Common myeloid progenitor, CD34-positive (primary cell): ENCODE measurements at regions of chr14 and their contacts with region 1.

Region 1: GRCh38 chr14:23483236-23483854 is 13.8 kb downstream of the NGDN start:
- DNase-seq: peak; percentile 26 to 40 (median 35)
- H3K4me3 ChIP-seq: no peak overlapping the region
- H3K27ac ChIP-seq: no peak overlapping the region
- H3K4me1 ChIP-seq: peaks cover 0 to 2% (median 0%) of the 10 kb centered on the region in 4 experiments
- H3K27me3 ChIP-seq: no peaks in the 10 kb centered on the region

Region 2: DNA sequence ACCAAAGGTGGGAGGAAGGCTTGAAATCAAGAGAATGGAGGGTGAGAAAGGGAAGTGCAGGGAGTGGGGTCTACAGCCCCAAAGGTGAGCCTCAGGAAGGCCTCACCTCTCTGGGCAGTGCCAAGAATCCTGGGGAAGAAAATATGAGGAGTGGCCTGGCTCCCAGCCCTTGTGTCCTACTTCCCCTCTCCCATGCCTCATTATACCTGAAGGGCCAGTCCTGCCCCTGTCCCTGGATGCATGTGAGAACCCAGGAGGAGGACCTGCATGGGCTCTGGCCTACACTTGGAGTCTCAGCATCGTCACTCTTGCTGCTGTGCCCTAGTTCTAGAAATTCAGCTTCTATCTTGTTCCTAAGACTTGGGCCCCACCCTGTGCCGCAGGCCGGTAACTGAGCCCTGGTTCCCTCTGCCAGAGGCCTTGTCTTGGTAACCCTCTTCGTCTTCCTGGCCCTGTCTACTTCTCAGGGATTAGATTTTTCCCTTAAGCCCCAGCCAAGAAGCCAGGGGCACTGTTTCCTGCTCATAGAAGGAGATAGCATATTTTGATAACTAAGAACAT is 37.0 kb before region 1 on chr14:
- CTCF ChIA-PET with region 1: no interaction called
- POLR2A ChIA-PET with region 1: no interaction called
- DNase-seq: no peak
- H3K4me3 ChIP-seq: no peak overlapping the region
- H3K27ac ChIP-seq: no peak overlapping the region
- H3K4me1 ChIP-seq: no peaks in the 10 kb centered on the region
- H3K27me3 ChIP-seq: peaks cover 0 to 7% (median 0%) of the 10 kb centered on the region in 5 experiments

Region 3: DNA sequence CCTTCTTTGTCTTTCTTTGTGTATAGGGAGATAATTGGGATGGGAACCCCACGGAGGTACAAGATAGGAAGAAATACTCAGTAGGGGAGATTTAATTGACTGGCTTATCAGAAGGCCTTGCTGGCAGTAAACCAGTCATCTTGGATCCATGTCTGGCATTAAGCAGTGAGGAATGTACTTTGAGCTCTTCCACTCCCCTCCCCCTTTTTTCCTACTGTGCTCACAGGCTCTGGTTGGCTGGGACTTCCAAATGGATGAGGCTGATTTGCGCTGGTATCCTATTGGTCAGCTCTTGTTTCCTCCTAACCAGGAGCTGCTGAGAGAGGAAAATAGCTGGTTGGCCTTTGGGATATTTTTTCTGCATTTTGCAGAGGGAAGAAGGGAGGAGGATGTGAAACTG is 10.9 kb after region 1 on chr14:
- CTCF ChIA-PET with region 1: interaction called, 26 read pairs
- POLR2A ChIA-PET with region 1: no interaction called
- DNase-seq: no peak
- H3K4me3 ChIP-seq: no peak overlapping the region
- H3K27ac ChIP-seq: no peak overlapping the region
- H3K4me1 ChIP-seq: no peaks in the 10 kb centered on the region
- H3K27me3 ChIP-seq: no peaks in the 10 kb centered on the region

Region 4: DNA sequence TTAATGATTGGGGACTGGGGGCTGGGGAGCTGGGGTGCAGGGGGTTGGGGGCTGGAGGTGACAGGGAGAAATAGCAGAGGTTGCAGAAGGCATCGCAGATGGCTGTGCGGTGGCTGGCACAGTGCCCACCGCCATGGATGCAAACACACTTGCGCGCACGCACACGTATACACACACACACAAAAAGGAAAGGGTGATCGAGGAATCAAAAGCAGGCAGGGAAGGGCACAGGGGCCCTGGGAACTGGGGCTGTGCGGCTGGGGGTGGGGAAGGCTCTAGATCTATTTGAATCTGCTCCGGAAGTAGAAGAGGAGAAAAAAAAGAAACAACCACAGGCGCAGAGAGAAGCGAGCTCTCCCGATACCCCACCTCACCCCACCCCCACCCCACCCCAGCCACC is 28.8 kb after region 1 on chr14:
- CTCF ChIA-PET with region 1: interaction called, 13 read pairs
- POLR2A ChIA-PET with region 1: no interaction called
- DNase-seq: peak; percentile 11 to 57 (median 52)
- H3K4me3 ChIP-seq: peak overlapping the region in 4 of 7 experiments; percentile 6 to 62 (median 37)
- H3K27ac ChIP-seq: no peak overlapping the region
- H3K4me1 ChIP-seq: peaks cover 0 to 5% (median 3%) of the 10 kb centered on the region in 4 experiments
- H3K27me3 ChIP-seq: no peaks in the 10 kb centered on the region